PC-3 (cell line): ENCODE measurements at regions of chr3 and their contacts with region 1.

Region 1: GRCh38 chr3:8805774-8806173 is 36.4 kb upstream of the OXTR start:
- DNase-seq: no peak
- ATAC-seq: no peak
- H3K4me3 ChIP-seq: no peak overlapping the region
- H3K27ac ChIP-seq: no peak overlapping the region
- H3K4me1 ChIP-seq: no peaks in the 10 kb centered on the region
- H3K27me3 ChIP-seq: no peaks in the 10 kb centered on the region
- CTCF ChIP-seq: no peak

Region 2: DNA sequence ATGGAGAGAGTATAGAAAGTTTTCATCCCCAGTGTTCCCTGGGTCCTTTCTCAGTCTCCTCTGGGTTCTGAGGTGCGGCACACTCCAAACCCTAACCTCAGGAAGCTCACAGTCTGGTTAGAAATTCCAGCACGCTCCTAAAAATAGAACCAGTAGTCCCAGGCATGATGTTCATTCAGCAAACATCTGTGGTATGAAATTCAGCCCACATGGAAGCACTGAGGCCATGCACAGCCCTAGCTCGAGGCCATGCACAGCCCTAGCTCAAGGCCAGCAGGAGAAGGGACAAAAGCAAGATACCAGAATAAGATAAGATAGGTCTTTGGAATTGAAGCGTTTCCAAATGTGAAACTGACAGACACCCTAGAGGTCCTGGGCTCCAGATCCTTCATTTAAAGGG is 45.9 kb after region 1 on chr3:
- CTCF ChIA-PET with region 1: no interaction called
- POLR2A ChIA-PET with region 1: interaction called, 16 read pairs
- intact Hi-C with region 1: no loop called
- DNase-seq: peak; percentile 46
- ATAC-seq: peak; percentile 48
- H3K4me3 ChIP-seq: no peak overlapping the region
- H3K27ac ChIP-seq: no peak overlapping the region
- H3K4me1 ChIP-seq: peaks cover 17% of the 10 kb centered on the region
- H3K27me3 ChIP-seq: no peaks in the 10 kb centered on the region
- CTCF ChIP-seq: no peak